ENCODE measurements at regions of chr9 and their contacts with region 1.

Region 1: DNA sequence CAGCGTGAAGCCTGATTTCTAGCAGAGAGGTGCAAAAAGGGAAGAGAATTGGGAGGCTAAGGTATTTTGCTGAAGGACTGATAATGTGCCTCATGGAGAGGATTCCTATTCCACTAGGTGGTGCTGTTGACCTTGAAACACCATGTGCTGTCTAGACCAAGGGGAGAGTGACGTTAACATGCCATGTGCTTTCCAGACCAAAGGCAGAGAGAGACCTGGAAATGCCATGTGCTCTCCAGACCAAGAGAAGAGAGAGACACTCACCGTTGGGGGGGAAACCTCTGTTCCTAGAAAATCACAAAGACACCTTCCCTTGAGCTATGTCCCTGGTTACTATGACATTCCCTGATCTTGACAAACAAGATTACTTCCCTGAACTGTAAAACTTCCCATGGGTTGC is 286.0 kb upstream of the TUSC1 start:
- ATAC-seq: peak in 5 of 8 experiments; percentile 39 to 99 (median 96)
- H3K4me3 ChIP-seq: no peak overlapping the region
- H3K27ac ChIP-seq: no peak overlapping the region
- H3K4me1 ChIP-seq: no peaks in the 10 kb centered on the region

Region 2: DNA sequence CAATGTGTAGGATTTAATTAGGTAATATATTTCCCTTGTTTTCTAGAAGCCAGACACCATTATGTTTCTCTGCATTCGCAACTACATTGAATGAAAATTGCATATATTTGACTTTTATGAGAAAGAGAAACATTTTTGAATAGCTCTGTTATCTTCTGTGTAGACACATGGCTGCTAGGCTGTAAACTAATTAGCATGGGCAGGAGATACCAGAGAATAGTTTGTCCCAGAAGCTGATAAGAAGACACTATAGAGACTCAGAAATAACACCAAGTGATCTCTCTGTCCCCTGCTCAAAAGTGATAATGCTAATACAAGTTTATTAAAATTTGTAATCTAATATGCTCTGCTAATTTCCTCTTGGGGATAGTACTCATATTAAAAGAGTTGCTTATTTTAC is 88.0 kb before region 1 on chr9:
- in situ Hi-C with region 1: no loop called
- ATAC-seq: no peak
- H3K4me3 ChIP-seq: no peak overlapping the region
- H3K27ac ChIP-seq: no peak overlapping the region
- H3K4me1 ChIP-seq: no peaks in the 10 kb centered on the region

Region 3: DNA sequence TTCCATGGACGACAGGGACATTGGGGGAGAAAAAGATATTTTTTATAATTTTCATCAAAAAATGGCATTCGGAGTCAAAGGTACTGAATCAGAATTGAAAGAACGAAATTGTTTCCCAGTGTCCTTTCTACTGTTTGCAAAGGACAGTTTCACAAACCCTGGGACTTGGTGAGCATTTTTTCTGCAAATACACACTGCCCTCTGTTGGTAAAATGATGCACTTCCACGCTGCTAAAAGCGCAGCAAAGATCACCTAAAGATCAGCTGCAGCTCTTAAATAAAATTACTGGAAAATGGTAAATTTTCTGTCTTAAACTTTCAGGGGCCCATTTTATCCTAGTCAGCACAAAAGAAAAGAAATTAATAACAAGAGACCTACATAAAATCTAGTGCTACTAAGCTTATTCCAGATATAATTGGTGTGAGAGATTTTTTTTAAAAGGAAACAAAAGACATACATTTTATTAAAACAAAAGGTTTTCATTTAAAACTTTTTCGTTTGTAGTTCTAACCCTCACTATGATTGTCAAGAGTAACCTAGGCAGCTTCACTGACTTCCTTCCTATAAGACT is 362.3 kb after region 1 on chr9:
- in situ Hi-C with region 1: loop called in 2 of 9 experiments (anchors 5 kb)
- ATAC-seq: peak; percentile 72 to 88 (median 82)
- H3K4me3 ChIP-seq: no peak overlapping the region
- H3K27ac ChIP-seq: no peak overlapping the region
- H3K4me1 ChIP-seq: peaks cover 7 to 23% of the 10 kb centered on the region in 2 donors

Measured in motor neuron (in vitro differentiated cells).